Activated naive CD4-positive, alpha-beta T cell treated with anti-CD3 and anti-CD28 coated beads for 36 hours (primary cell): ENCODE measurements at regions of chr2 and their contacts with region 1.

Region 1: DNA sequence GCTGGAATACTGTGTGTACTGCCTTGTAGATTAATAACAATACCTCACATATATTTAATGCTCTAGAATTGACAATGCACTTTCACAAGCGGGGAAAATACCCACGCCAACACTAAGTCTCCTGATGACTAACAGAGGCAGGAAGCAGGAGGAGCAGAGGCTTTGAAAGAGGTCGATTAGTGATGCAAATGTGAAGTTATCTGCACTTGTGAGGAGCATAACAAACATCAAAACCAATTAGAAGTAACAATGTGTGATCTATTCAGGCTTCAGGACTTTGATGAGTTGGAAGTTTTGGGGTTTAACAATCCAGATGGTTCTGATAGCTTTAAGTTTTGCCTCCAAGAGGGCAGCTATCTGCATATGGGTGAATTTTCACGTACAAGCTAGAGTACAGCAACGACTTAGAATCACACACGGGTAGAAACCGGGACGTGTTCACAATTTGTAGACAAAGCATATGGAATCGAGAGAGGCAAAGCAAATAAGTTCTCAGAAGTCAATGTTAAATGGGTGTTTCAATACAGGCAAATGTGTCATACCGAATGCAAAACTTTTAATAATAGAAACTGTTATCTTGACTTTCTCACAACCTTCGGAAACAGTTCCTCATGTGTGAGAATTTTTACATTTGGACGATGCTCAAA is 114.5 kb downstream of the METTL8 start:
- DNase-seq: peak; percentile 85
- H3K4me3 Mint-ChIP-seq: peak overlapping the region; percentile 55
- H3K27ac Mint-ChIP-seq: peak overlapping the region; percentile 99
- H3K4me1 Mint-ChIP-seq: peaks cover 54% of the 10 kb centered on the region
- H3K27me3 Mint-ChIP-seq: no peaks in the 10 kb centered on the region

Region 2: DNA sequence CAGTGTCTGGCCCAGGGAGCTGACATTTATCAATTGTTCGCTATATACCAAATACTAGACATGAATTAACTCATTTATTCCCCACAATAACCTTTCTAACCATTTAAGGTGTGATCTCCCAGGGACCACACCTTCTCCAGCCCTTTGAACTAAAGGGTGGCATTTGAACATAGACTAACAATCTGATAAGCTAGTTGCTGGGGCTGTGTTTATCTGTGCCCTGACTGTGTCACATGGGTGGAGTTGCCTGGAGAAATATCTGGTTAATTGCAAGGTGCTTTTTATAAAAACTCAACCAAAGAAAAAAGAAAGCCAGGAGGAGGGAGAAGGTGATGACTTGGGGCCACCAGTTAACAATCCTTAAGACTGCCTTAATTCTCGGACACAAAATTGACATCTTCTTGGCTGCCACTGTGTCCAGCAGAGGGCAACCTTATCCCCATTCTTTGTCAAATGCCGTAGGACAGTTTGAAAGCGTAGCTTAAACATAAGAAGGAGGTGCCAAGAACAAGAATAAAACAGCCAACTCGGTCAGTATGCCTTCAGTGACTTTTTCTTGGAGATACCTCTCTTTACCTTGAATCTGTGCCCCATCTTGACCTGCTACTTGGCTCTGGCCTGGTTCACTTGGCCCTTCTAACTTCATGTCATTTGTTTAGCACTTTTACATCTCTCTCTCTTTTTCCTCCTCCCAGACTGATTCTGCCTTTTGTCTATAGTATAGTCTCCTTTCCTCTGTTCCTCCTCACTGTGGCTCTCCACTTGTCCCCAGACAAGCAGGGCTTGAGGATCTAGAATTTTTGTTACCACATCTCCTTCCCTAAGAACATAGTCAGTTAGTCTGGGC is 958.0 kb before region 1 on chr2:
- CTCF ChIA-PET with region 1: no interaction called
- intact Hi-C with region 1: loop called (anchors 2 kb)
- DNase-seq: peak; percentile 77
- H3K4me3 Mint-ChIP-seq: no peak overlapping the region
- H3K27ac Mint-ChIP-seq: no peak overlapping the region
- H3K4me1 Mint-ChIP-seq: peaks cover 28% of the 10 kb centered on the region
- H3K27me3 Mint-ChIP-seq: peaks cover 6% of the 10 kb centered on the region

Region 3: GRCh38 chr2:171086352-171087290 is 232.7 kb before region 1 on chr2:
- CTCF ChIA-PET with region 1: no interaction called
- intact Hi-C with region 1: loop called (anchors 1 kb)
- DNase-seq: peak; percentile 80
- H3K4me3 Mint-ChIP-seq: peak overlapping the region; percentile 77
- H3K27ac Mint-ChIP-seq: peak overlapping the region; percentile 74
- H3K4me1 Mint-ChIP-seq: peaks cover 65% of the 10 kb centered on the region
- H3K27me3 Mint-ChIP-seq: no peaks in the 10 kb centered on the region

Region 4: DNA sequence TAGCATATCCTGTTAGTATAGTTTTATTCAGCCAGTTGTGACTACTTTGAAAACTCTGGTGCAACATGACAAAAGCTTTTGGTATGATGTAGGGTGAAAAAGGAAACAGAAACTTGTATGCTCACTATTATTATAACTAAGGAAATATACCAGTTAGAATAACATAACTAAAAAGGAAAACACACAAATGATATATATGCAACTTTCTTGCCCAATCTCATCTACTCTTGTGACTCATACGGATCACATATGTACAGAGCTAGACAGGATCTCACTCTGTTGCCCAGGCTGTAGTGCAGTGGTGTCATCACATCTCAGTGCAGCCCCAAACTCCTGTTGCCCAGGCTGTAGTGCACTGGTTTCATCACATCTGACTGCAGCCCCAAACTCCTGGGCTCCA is 146.2 kb before region 1 on chr2:
- CTCF ChIA-PET with region 1: no interaction called
- intact Hi-C with region 1: loop called (anchors 1 kb)
- DNase-seq: peak; percentile 57
- H3K4me3 Mint-ChIP-seq: no peak overlapping the region
- H3K27ac Mint-ChIP-seq: no peak overlapping the region
- H3K4me1 Mint-ChIP-seq: peaks cover 14% of the 10 kb centered on the region
- H3K27me3 Mint-ChIP-seq: no peaks in the 10 kb centered on the region

Region 5: GRCh38 chr2:171225302-171225980 is 93.8 kb before region 1 on chr2:
- CTCF ChIA-PET with region 1: no interaction called
- intact Hi-C with region 1: no loop called
- DNase-seq: no peak
- H3K4me3 Mint-ChIP-seq: no peak overlapping the region
- H3K27ac Mint-ChIP-seq: no peak overlapping the region
- H3K4me1 Mint-ChIP-seq: peaks cover 13% of the 10 kb centered on the region
- H3K27me3 Mint-ChIP-seq: no peaks in the 10 kb centered on the region

Region 6: DNA sequence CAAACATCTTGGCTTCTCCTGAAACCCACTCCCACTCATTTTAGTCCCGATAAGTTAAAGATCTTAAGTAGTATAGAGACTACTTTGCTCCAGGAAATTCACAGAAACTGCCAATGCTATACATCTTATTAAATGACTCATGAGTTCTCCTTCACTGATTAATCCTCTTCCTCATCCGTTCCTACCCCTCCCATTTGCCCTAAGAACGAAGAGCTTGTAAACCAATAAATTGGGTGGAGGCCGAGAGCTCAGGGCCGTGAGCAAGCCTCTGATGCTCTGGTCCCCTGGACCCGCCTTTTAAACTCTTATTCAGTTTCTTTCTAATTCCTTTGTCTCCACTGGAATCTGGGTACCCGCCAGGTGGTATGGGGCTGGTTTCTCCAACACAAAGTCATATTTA is 45.9 kb after region 1 on chr2:
- CTCF ChIA-PET with region 1: no interaction called
- intact Hi-C with region 1: no loop called
- DNase-seq: no peak
- H3K4me3 Mint-ChIP-seq: no peak overlapping the region
- H3K27ac Mint-ChIP-seq: no peak overlapping the region
- H3K4me1 Mint-ChIP-seq: no peaks in the 10 kb centered on the region
- H3K27me3 Mint-ChIP-seq: no peaks in the 10 kb centered on the region

Region 7: GRCh38 chr2:171390941-171391516 is 71.7 kb after region 1 on chr2:
- CTCF ChIA-PET with region 1: interaction called, 4 read pairs
- intact Hi-C with region 1: loop called (anchors 1 kb)
- DNase-seq: peak; percentile 38
- H3K4me3 Mint-ChIP-seq: no peak overlapping the region
- H3K27ac Mint-ChIP-seq: no peak overlapping the region
- H3K4me1 Mint-ChIP-seq: peaks cover 16% of the 10 kb centered on the region
- H3K27me3 Mint-ChIP-seq: no peaks in the 10 kb centered on the region

Region 8: DNA sequence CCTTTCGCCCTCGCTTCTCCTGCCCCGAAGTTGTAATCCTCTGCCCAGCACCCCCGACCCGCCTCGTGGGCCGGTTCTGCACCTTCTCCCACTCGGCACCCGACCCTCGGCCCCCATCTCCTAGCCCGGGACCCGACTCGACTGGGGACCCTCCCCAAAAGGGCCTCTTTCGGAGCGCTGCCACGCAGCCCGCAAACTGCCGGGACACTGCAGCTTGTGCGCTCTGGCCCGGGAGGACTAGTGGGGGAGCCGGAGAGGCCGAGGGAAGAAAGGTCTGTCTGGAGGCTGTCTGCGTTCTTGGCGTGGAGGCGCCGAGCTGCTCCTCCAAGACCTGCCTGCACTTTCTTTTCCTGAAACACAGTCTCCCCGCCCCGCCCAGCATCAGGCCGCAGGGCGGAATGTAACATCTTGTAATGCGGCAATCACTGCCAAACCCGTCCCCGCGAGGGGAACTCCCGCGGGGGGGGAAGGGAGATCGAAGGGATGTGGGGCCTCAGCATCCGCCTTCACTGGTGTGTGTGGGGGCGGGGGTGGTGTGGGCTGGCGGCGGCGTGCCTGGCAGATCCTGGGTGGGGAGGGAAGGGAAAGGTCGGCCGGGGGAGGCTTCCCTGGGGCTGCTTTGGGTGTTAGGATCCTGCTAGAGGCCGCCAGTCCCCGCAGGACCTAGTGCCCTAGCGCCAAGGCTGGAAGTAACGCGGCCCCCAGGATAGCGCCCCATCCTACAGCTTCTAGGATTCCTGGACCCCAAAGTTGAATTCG is 776.0 kb after region 1 on chr2:
- CTCF ChIA-PET with region 1: no interaction called
- intact Hi-C with region 1: loop called (anchors 5 kb)
- DNase-seq: peak; percentile 87
- H3K4me3 Mint-ChIP-seq: peak overlapping the region; percentile 78
- H3K27ac Mint-ChIP-seq: peak overlapping the region; percentile 47
- H3K4me1 Mint-ChIP-seq: peaks cover 42% of the 10 kb centered on the region
- H3K27me3 Mint-ChIP-seq: peaks cover 75% of the 10 kb centered on the region